ENCODE measurements at regions of chr1 and their contacts with region 1.

Region 1: DNA sequence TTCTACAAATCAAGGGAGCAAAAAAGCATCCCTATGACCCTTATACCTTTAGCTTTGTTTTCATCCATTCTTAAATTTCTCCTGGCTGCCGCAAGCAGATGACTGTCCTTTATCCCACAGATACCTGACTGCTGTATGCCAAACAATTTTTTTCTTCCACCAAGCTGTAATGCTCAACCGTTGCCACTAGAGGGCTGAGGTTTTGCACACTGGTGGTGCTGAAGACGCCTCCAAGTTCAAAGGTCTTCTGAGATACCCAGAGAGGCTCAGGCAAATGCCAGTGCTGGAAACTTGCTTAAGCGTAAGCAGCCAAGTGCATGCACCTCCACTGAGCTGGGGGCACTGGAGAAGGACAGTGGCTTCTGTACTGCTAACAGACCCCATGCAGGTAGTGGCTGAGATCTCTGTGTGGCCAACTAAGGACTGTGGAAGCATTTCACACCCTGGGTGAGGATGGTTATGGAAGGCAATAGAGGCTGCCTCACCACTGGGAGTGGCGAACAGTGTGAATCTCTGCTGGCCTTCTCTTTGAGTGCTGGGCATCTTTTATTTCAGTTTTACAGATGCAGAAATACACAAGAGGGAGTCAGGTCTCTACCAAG is 28.5 kb downstream of the CNIH3 start:
- DNase-seq: peak; percentile 45
- H3K4me3 Mint-ChIP-seq: no peak overlapping the region
- H3K27ac Mint-ChIP-seq: no peak overlapping the region
- H3K4me1 Mint-ChIP-seq: peaks cover 2% of the 10 kb centered on the region
- H3K27me3 Mint-ChIP-seq: peaks cover 13% of the 10 kb centered on the region

Region 2: DNA sequence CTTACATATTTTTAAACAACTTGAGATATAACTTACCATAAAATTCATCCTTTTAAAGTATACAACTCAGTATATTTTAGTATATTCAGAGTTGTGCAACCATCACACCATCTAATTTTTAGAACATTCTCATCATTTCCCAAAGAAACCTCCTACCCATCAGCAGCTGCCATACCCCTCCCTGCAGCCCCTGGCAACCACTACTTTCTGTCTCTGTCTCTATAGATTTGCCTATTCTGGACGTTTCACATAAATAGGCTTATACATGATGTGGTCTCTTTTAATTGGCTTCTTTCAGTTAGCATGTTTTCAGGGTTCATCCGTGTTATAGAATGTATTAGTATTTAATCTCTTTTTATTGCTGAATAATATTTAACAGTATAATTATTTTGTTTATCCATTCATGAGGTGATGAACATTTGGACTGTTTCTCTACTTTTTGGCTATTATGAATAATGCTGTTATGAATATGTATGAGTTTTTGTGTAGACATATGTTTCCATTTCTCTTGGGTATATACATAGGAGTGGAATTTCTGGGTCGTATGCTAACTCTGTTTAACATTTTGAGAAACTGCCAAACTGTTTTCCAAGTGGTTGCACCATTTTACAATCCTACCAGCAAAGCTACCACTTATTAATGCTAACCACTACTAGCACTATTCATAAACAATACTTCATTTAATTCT is 239.6 kb before region 1 on chr1:
- intact Hi-C with region 1: no loop called
- DNase-seq: no peak
- H3K4me3 Mint-ChIP-seq: no peak overlapping the region
- H3K27ac Mint-ChIP-seq: no peak overlapping the region
- H3K4me1 Mint-ChIP-seq: peaks cover 11% of the 10 kb centered on the region
- H3K27me3 Mint-ChIP-seq: no peaks in the 10 kb centered on the region

Region 3: DNA sequence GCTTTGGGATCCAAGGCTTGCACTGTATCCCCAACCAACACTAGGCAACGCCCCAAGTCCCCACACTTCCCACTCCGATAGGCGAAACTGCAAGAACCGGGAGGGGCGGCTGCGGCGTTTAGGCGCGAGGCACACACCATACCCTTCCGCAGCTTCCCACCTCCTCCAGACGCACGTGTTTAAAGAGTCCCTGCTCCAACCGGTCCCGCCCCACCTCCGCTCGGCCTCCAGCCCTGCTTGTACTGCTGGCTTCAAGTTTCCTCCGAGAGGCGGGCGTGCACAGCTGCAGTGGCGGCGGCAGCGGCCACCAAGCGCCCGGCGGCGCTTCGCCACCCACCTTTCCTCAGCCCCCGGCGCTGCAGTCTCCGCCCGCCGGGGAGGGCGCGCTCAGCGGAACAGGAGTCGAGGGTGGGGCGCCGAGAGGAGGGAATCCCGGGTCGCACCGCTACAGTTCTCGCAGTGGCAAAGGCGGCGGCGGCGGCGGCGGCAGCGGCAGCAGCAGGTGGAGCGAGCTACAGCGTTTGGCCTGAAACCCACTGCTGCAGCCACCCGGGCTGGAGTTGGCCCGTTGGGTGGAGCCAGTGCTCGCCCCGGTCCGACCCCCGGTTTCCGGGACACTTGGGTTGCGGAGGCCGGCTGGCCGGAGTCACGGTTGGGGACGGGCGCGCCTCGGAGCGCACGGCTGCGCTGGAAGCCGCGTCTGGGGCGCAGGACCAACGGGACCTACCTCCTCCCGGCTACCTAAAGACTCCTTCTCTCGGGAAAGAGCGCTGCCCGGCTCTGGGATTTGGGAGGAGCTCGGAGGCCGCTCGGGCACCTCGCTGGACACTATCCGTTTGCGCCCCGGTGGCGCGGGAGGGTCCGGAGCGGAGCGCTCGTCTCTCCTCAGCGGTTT is 28.5 kb before region 1 on chr1 and contains the start of gene CNIH3:
- intact Hi-C with region 1: no loop called
- DNase-seq: no peak
- H3K4me3 Mint-ChIP-seq: peak within 1 kb of the TSS; percentile 70
- H3K27ac Mint-ChIP-seq: no peak within 1 kb of the TSS
- H3K4me1 Mint-ChIP-seq: peaks cover 27% of the 10 kb centered on the region
- H3K27me3 Mint-ChIP-seq: peaks cover 76% of the 10 kb centered on the region
- total RNA-seq, gene CNIH3: 0.94 and 1.5 TPM in 2 replicates

Region 4: DNA sequence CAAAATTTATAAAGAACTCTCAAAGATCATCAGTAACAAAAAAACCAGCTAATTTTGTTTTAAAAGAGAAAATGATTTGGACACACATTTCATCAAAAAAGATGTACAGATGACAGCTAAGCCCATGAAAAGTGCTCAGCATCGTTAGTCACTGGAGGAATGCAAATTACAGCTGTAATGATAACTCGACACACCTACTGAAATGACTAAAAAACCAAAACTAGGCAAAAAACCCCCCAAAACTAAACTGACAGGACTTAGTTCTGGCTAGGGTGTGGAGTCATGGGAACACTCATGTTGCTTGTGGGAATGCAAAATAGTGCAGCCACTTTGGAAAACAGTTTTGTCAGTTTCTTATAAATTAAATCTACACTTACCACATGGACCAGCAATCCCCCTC is 30.9 kb after region 1 on chr1:
- intact Hi-C with region 1: no loop called
- DNase-seq: no peak
- H3K4me3 Mint-ChIP-seq: no peak overlapping the region
- H3K27ac Mint-ChIP-seq: no peak overlapping the region
- H3K4me1 Mint-ChIP-seq: no peaks in the 10 kb centered on the region
- H3K27me3 Mint-ChIP-seq: peaks cover 4% of the 10 kb centered on the region

Region 5: GRCh38 chr1:224851210-224851847 is 206.7 kb after region 1 on chr1:
- intact Hi-C with region 1: loop called (anchors 10 kb)
- DNase-seq: peak; percentile 37
- H3K4me3 Mint-ChIP-seq: no peak overlapping the region
- H3K27ac Mint-ChIP-seq: no peak overlapping the region
- H3K4me1 Mint-ChIP-seq: no peaks in the 10 kb centered on the region
- H3K27me3 Mint-ChIP-seq: no peaks in the 10 kb centered on the region

Region 6: DNA sequence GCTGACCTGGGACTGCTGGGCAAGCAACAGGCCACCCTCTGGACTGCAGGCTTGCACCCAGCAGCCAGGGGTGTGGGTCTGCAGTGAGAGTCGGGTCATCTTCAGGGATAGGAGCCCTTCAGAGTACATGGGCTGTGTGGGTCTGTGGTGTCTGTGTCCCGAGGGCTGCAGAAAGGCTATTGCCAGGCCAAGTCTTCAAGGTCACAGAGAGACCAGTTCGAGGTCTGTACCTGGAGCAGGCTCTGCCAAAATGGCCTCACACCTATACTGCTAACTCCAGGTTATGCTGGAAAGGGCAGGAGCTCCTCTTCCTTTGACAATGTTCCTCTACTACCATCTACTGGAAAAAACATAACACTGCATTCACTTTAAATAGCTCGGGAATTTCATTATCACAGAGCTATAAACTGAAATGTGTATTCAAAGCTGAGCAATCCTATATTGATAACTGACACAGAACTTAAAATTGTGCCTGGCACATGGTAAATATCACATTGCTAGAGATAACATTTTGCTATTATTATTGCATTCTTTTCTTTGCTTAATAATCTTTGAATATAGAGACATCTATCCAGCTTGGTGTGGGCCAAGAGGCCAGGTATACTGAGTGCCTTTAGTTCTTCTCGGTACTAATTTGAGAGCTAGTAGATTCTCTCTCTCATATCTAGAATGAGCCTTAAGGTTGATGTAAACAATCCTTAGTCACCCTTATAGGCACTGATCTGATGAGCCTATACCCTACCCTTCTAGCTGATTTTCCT is 277.9 kb after region 1 on chr1:
- intact Hi-C with region 1: loop called (anchors 10 kb)
- DNase-seq: no peak
- H3K4me3 Mint-ChIP-seq: no peak overlapping the region
- H3K27ac Mint-ChIP-seq: no peak overlapping the region
- H3K4me1 Mint-ChIP-seq: no peaks in the 10 kb centered on the region
- H3K27me3 Mint-ChIP-seq: peaks cover 3% of the 10 kb centered on the region

Measured in activated T-helper 2 cell treated with anti-CD3 and anti-CD28 coated beads, Interferon-gamma antibody, Interleukin-2, Interleukin-4, amounts not matched to agents 10 μg/mL and 5 μg/mL and 100 μg/mL, durations not matched to agents 14 hours and 24 hours and 36 hours (primary cell).